Naive thymus-derived CD4-positive, alpha-beta T cell (primary cell): ENCODE measurements at regions of chr11 and their contacts with region 1.

Region 1: DNA sequence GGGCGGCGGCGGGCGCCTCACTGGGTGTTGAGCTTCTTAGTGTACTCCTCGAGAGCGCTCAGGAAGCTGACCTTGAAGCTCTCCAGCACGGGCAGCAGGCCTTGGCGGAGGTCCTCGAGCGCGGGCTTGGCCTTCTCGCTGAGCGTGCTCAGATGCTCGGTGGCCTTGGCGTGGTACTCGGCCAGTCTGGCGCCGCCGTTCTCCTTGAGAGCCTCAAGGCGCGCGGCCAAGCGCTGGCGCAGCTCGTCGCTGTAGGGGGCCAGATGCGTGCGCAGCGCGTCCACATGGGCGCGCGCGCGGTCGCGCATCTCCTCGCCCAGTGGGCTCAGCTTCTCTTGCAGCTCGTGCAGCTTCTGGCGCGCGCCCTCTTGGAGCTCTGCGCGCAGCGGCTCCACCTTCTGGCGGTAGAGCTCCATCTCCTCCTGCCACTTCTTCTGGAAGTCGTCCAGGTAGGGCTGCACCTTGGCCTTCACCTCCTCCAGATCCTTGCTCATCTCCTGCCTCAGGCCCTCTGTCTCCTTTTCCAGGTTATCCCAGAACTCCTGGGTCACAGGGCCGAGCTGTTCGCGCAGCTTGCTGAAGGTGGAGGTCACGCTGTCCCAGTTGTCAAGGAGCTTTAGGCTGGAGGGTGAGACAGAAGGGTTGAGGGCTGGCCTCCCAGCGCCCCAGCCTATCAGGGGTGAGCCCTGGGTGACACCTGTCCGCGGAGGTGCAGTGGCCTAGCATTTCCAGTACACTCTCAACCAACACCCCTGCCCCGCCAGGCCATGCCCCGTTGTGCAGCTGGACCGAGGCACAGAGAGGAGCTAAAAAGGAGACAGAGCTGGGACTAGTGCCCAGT is 1.4 kb downstream of the APOA1 start:
- DNase-seq: peak; percentile 66 to 85 (median 80)
- ATAC-seq: peak; percentile 97
- H3K4me3 ChIP-seq: peak overlapping the region; percentile 71
- H3K4me3 Mint-ChIP-seq: peak overlapping the region; percentile 68 to 84 (median 80)
- H3K27ac ChIP-seq: peak overlapping the region; percentile 41
- H3K27ac Mint-ChIP-seq: peak overlapping the region in 6 of 9 donors; percentile 31 to 75 (median 50)
- H3K4me1 ChIP-seq: peaks cover 4 to 9% of the 10 kb centered on the region in 2 donors
- H3K4me1 Mint-ChIP-seq: peaks cover 4 to 17% (median 14%) of the 10 kb centered on the region in 7 donors
- H3K27me3 ChIP-seq: no peaks in the 10 kb centered on the region
- H3K27me3 Mint-ChIP-seq: peaks cover 0 to 4% (median 0%) of the 10 kb centered on the region in 5 donors

Region 2: DNA sequence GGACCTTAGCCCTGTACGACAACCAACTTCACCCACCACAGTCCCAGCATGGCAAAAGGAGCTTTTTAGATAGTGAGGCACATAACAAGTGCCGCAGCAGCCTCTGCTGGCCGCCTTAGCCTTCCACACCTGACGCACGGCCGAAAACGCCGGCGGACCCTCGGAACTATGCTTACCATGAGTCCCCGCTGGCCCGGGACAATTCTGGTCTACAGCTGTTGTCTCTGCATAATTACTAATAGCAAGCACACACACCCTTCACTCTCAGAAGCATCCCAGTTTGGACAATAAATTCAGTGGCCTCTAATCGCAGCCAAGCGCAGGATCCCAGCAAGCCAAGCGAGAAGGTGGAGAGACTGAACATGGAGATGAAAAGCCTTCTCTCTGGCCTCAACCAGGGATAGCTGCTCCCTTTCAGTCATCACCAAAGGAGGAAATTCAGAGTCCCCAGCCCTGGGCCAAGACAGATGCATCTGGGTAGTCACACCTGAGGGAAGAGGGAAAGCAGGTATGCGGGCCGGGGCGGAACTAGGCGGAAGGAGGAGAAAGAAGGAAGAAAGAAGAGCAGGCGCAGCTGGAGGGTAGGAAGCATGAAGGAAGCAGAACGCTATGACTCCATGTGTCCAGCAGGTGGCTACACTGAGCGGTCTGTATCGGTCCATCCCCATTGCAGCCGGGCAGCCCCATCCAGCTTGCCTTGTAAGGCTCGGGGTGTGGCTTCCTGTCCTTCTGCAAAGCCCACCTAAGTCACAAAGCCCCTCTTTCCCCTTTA is 103.6 kb before region 1 on chr11:
- CTCF ChIA-PET with region 1: interaction called, 5 read pairs
- POLR2A ChIA-PET with region 1: no interaction called
- intact Hi-C with region 1: loop called (anchors 1 to 5 kb)
- DNase-seq: peak in 7 of 9 donors; percentile 24 to 56 (median 40)
- ATAC-seq: peak; percentile 91
- H3K4me3 ChIP-seq: no peak overlapping the region
- H3K4me3 Mint-ChIP-seq: peak overlapping the region in 1 of 10 donors; percentile 42
- H3K27ac ChIP-seq: no peak overlapping the region
- H3K27ac Mint-ChIP-seq: peak overlapping the region in 2 of 9 donors; percentile 6 to 57
- H3K4me1 ChIP-seq: peaks cover 0 to 5% of the 10 kb centered on the region in 2 donors
- H3K4me1 Mint-ChIP-seq: peaks cover 4 to 15% (median 8%) of the 10 kb centered on the region in 7 donors
- H3K27me3 ChIP-seq: no peaks in the 10 kb centered on the region
- H3K27me3 Mint-ChIP-seq: peaks cover 0 to 6% (median 0%) of the 10 kb centered on the region in 5 donors

Region 3: GRCh38 chr11:116853461-116854073 is 17.6 kb after region 1 on chr11:
- CTCF ChIA-PET with region 1: interaction called, 51 read pairs
- POLR2A ChIA-PET with region 1: interaction called, 49 read pairs
- intact Hi-C with region 1: loop called (anchors 1 kb)
- DNase-seq: peak in 8 of 9 donors; percentile 53 to 84 (median 77)
- ATAC-seq: peak; percentile 98
- H3K4me3 ChIP-seq: peak overlapping the region; percentile 38
- H3K4me3 Mint-ChIP-seq: peak overlapping the region; percentile 47 to 84 (median 70)
- H3K27ac ChIP-seq: peak overlapping the region; percentile 4
- H3K27ac Mint-ChIP-seq: peak overlapping the region; percentile 41 to 92 (median 81)
- H3K4me1 ChIP-seq: peaks cover 57 to 70% of the 10 kb centered on the region in 2 donors
- H3K4me1 Mint-ChIP-seq: peaks cover 52 to 78% (median 76%) of the 10 kb centered on the region in 7 donors
- H3K27me3 ChIP-seq: no peaks in the 10 kb centered on the region
- H3K27me3 Mint-ChIP-seq: no peaks in the 10 kb centered on the region